ENCODE measurements at regions of chr16 and their contacts with region 1.

Region 1: GRCh38 chr16:2003827-2004641 is 5.6 kb downstream of the ZNF598 start:
- DNase-seq: peak; percentile 87 to 95
- ATAC-seq: peak; percentile 77 to 90
- H3K4me3 ChIP-seq: no peak overlapping the region
- H3K27ac ChIP-seq: peak overlapping the region; percentile 56 to 71
- H3K4me1 ChIP-seq: peaks cover 49% of the 10 kb centered on the region
- CTCF ChIP-seq: peak; percentile 87
- EP300 ChIP-seq: no peak
- POLR2A ChIP-seq: no peak
- RAD21 ChIP-seq: peak; percentile 52 to 64

Region 2: GRCh38 chr16:1964506-1965395 is 39.3 kb before region 1 on chr16 and contains the start of gene RPS2:
- CTCF ChIA-PET with region 1: interaction called, 13 read pairs
- POLR2A ChIA-PET with region 1: interaction called, 11 read pairs
- DNase-seq: peak; percentile 99
- ATAC-seq: peak; percentile 67 to 81
- H3K4me3 ChIP-seq: peak within 1 kb of the TSS; percentile 88
- H3K27ac ChIP-seq: peak within 1 kb of the TSS; percentile 92 to 100
- H3K4me1 ChIP-seq: peaks cover 34% of the 10 kb centered on the region
- CTCF ChIP-seq: no peak
- EP300 ChIP-seq: no peak
- POLR2A ChIP-seq: peak; percentile 97
- RAD21 ChIP-seq: no peak
- polyA plus RNA-seq, gene RPS2: 2,621 and 3,507 TPM in 2 replicates

Region 3: GRCh38 chr16:2016407-2016922 is 12.4 kb after region 1 on chr16:
- CTCF ChIA-PET with region 1: interaction called, 37 read pairs
- POLR2A ChIA-PET with region 1: no interaction called
- DNase-seq: no peak
- ATAC-seq: peak; percentile 3; a peak in 2 of 6 replicates
- H3K4me3 ChIP-seq: no peak overlapping the region
- H3K27ac ChIP-seq: peak overlapping the region; percentile 93 to 94
- H3K4me1 ChIP-seq: peaks cover 28% of the 10 kb centered on the region
- CTCF ChIP-seq: peak; percentile 42
- EP300 ChIP-seq: no peak
- POLR2A ChIP-seq: no peak
- RAD21 ChIP-seq: no peak

Region 4: GRCh38 chr16:2033057-2033908 is 29.2 kb after region 1 on chr16:
- CTCF ChIA-PET with region 1: interaction called, 13 read pairs
- POLR2A ChIA-PET with region 1: no interaction called
- DNase-seq: peak in 1 of 2 experiments; percentile 65
- ATAC-seq: peak; percentile 55 to 69
- H3K4me3 ChIP-seq: peak overlapping the region; percentile 25; the same call in 2 of the 3 replicates
- H3K27ac ChIP-seq: peak overlapping the region; percentile 82 to 90
- H3K4me1 ChIP-seq: peaks cover 62% of the 10 kb centered on the region
- CTCF ChIP-seq: no peak
- EP300 ChIP-seq: no peak
- POLR2A ChIP-seq: 0 out of 2 replicates have a peak, but pooled peaks have one; percentile 11
- RAD21 ChIP-seq: no peak

Region 5: GRCh38 chr16:2056681-2057407 is 52.8 kb after region 1 on chr16:
- CTCF ChIA-PET with region 1: interaction called, 18 read pairs
- POLR2A ChIA-PET with region 1: no interaction called
- DNase-seq: peak in 1 of 2 experiments; percentile 56
- ATAC-seq: peak; percentile 88 to 91
- H3K4me3 ChIP-seq: no peak overlapping the region
- H3K27ac ChIP-seq: no peak overlapping the region
- H3K4me1 ChIP-seq: no peaks in the 10 kb centered on the region
- CTCF ChIP-seq: no peak
- EP300 ChIP-seq: no peak
- POLR2A ChIP-seq: no peak
- RAD21 ChIP-seq: 0 out of 5 replicates have a peak, but pooled peaks of 1 of the 2 experiments have one; percentile 9

Region 6: GRCh38 chr16:2090777-2091546 is 86.9 kb after region 1 on chr16:
- CTCF ChIA-PET with region 1: interaction called, 20 read pairs
- POLR2A ChIA-PET with region 1: no interaction called
- DNase-seq: peak in 1 of 2 experiments; percentile 66
- ATAC-seq: peak; percentile 10 to 20; a peak in 3 of 6 replicates
- H3K4me3 ChIP-seq: no peak overlapping the region
- H3K27ac ChIP-seq: peak overlapping the region in 1 of 2 experiments; percentile 52; a peak in 2 of 6 replicates
- H3K4me1 ChIP-seq: no peaks in the 10 kb centered on the region
- CTCF ChIP-seq: 0 out of 3 replicates have a peak, but pooled peaks have one; percentile 15
- EP300 ChIP-seq: no peak
- POLR2A ChIP-seq: no peak
- RAD21 ChIP-seq: peak in 1 of 2 experiments; percentile 15; a peak in 1 of 5 replicates

Region 7: DNA sequence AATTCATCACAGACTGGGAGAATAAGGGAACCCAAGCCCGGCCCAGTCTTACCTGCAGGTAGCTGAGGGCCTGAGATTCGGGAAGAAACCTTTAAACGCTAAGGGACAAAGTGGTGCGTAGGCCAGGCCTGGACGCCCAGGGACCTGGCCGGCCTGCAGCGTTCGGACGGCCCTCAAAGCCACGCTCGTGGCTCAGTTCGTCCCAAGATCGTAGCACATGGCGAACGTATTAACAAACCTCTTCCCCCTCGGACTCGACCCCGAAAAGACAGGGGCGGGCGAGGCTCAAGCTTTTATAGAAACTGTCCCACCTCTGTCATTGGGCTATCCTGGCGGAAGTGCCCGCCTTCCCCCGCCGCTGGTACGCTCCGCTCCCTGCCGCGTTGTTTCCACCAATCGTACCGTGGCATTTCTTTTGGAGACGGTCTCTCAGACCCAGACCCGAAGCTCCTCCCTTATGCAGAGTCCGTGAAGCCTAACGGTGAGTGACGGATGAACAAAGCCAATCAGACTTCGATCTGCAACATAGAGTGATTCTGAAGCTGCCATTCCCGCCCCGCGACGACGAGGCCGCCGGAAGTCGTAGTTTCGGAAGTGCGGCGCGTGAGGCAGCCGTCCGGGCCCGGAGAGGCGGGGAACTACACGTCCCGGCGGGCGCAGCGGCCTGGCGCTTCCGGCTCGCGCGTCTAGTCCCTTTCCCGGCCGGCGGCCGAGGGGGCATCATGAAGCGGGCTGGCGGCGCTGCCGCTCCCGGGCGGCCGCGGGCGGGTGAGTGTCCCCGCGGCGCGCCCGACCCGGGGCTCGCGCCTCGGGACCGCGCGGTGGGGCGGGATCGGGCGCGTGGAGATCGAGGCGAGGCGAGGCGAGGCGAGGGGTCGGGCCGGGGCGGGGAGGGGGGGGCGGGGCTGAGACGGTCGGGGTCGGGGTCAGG is 151.3 kb after region 1 on chr16 and contains the start of gene TRAF7:
- CTCF ChIA-PET with region 1: interaction called, 21 read pairs
- POLR2A ChIA-PET with region 1: interaction called, 11 read pairs
- DNase-seq: peak; percentile 99 to 100
- ATAC-seq: peak; percentile 70 to 84
- H3K4me3 ChIP-seq: peak within 1 kb of the TSS; percentile 88
- H3K27ac ChIP-seq: peak within 1 kb of the TSS; percentile 94
- H3K4me1 ChIP-seq: peaks cover 62% of the 10 kb centered on the region
- CTCF ChIP-seq: no peak
- EP300 ChIP-seq: no peak
- POLR2A ChIP-seq: peak; percentile 99
- RAD21 ChIP-seq: no peak
- polyA plus RNA-seq, gene TRAF7: 31.9 and 32.0 TPM in 2 replicates

Region 8: GRCh38 chr16:2288726-2289125 is 284.7 kb after region 1 on chr16:
- CTCF ChIA-PET with region 1: no interaction called
- POLR2A ChIA-PET with region 1: no interaction called
- DNase-seq: no peak
- ATAC-seq: no peak
- H3K4me3 ChIP-seq: no peak overlapping the region
- H3K27ac ChIP-seq: no peak overlapping the region
- H3K4me1 ChIP-seq: no peaks in the 10 kb centered on the region
- CTCF ChIP-seq: no peak
- EP300 ChIP-seq: no peak
- POLR2A ChIP-seq: no peak
- RAD21 ChIP-seq: no peak

Measured in A549 (cell line).